Right ventricle myocardium superior (tissue), 1 donor: ENCODE measurements at regions of chr15 and their contacts with region 1.

Region 1: GRCh38 chr15:99704444-99704838 is 28.8 kb downstream of the LYSMD4 start:
- DNase-seq: no peak
- ATAC-seq: peak; percentile 85

Region 2: GRCh38 chr15:99424978-99425656 is 279.3 kb before region 1 on chr15:
- intact Hi-C with region 1: loop called (anchors 10 kb)
- DNase-seq: peak; percentile 75
- ATAC-seq: peak; percentile 85

Region 3: DNA sequence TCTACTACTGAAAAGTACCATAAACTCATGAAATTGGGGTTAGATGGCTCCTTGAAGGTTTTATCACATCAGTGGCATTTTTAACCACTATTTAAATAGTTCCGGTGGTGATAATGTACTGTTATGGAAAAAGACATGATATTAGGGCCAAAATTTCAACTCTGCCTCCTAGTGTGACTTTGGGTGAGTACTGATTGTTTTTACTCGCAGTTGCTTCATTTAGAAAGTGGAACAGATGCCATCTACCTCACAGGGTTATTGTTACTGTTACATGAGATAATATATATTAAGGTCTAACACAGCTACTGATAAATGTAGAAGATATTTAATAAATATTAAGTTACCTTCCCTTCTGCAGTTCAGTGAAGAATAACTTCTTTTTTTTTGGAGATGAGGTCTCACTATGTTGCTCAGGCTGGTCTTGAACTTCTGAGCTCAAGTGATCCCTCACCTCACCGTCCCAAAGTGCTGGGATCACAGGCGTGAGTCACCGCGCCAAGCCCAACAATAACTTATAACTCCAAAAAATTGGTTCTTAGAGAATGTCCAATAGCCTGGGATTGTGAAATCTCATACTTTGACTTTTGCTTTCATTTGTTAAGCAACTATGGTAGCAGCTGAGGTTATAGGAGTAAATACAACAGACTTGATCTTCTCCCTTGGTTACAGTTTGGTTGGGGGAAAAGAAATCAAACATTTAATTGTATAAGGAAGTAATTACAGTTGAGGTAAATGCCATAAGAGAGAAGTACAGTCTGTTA is 90.4 kb before region 1 on chr15:
- intact Hi-C with region 1: no loop called
- DNase-seq: peak; percentile 43
- ATAC-seq: peak; percentile 8

Region 4: GRCh38 chr15:99925661-99926461 is 221.4 kb after region 1 on chr15:
- intact Hi-C with region 1: no loop called
- DNase-seq: peak; percentile 78
- ATAC-seq: peak; percentile 68